Mammary epithelial cell (primary cell): ENCODE measurements at regions of chr20 and their contacts with region 1.

Region 1: DNA sequence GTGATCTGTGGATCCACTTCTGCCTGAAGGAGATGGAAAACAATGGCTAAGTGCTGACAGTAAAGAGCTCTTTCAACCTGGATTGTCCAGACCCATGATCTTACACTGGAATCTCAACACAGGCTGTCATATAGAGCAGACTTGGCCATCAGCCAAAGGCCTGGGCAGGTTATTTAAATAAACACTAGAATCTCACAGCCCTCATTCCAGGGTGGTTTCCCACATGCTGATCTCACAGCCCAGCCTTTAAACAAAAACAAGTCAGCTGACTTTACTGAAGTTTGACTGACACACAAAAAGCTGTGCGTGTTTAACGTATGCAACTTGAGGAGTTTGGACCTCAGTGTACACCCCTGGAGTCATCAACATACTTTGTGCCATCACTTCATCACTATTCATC is 28.4 kb downstream of the SYNDIG1 start:
- DNase-seq: peak; percentile 76
- H3K4me3 ChIP-seq: no peak overlapping the region
- H3K27ac ChIP-seq: no peak overlapping the region
- H3K4me1 ChIP-seq: no peaks in the 10 kb centered on the region
- H3K27me3 ChIP-seq: no peaks in the 10 kb centered on the region
- CTCF ChIP-seq: no peak

Region 2: DNA sequence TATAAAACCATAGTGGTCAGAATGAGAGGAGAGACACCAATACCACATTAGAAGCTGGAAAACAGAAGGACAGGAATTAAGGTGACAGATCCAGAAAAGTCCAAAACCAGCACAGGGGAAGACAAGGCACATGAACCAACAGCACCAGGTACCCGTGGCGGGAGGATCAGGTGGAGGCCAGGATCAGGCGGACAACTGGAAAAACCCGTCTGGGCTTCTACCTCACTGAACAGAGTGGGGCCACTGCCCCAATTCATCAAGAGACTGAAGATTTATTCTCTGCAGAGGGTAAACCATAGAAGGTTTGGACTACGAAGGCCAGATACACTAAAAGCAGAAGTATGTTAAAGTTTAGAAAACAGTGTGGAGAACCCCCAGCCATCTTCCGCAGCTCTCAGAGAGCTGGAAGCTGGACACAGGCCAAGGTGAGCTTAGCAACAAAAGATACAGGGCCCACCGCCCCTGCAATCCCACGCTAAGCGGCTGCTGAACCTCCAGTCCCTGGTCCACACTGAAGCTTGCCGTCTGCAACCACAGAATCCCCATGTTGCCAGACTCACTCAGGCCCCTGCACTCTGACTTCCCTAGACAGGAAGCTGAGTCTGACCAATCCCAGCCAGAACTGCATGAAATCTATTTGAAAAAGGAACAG is 862.9 kb after region 1 on chr20:
- CTCF ChIA-PET with region 1: no interaction called
- dilution Hi-C with region 1: no loop called
- in situ Hi-C with region 1: loop called in 1 of 2 experiments (anchors 25 kb)
- intact Hi-C with region 1: no loop called
- DNase-seq: no peak
- H3K4me3 ChIP-seq: no peak overlapping the region
- H3K27ac ChIP-seq: no peak overlapping the region
- H3K4me1 ChIP-seq: no peaks in the 10 kb centered on the region
- H3K27me3 ChIP-seq: no peaks in the 10 kb centered on the region
- CTCF ChIP-seq: no peak